Sigmoid colon (tissue), 7 donors: ENCODE measurements at regions of chr2 and their contacts with region 1.

Region 1: GRCh38 chr2:39696838-39697237 is 31.1 kb downstream of the TMEM178A start:
- DNase-seq: no peak
- H3K4me3 ChIP-seq: no peak overlapping the region
- H3K27ac ChIP-seq: peak overlapping the region; percentile 11 to 61 (median 44)
- H3K4me1 ChIP-seq: peaks cover 0 to 17% (median 15%) of the 10 kb centered on the region in 4 donors
- H3K27me3 ChIP-seq: no peaks in the 10 kb centered on the region
- CTCF ChIP-seq: peak in 3 of 4 experiments; percentile 25 to 38 (median 26)
- EP300 ChIP-seq: no peak
- POLR2A ChIP-seq: no peak

Region 2: GRCh38 chr2:39325966-39326365 is 370.9 kb before region 1 on chr2:
- intact Hi-C with region 1: no loop called
- DNase-seq: no peak
- H3K4me3 ChIP-seq: no peak overlapping the region
- H3K27ac ChIP-seq: no peak overlapping the region
- H3K4me1 ChIP-seq: peaks cover 0 to 7% (median 0%) of the 10 kb centered on the region in 4 donors
- H3K27me3 ChIP-seq: no peaks in the 10 kb centered on the region
- CTCF ChIP-seq: no peak
- EP300 ChIP-seq: no peak
- POLR2A ChIP-seq: no peak

Region 3: GRCh38 chr2:39379643-39380524 is 317.0 kb before region 1 on chr2:
- intact Hi-C with region 1: loop called (anchors 2 kb)
- DNase-seq: no peak
- H3K4me3 ChIP-seq: no peak overlapping the region
- H3K27ac ChIP-seq: peak overlapping the region; percentile 9 to 74 (median 59)
- H3K4me1 ChIP-seq: peaks cover 0 to 57% (median 41%) of the 10 kb centered on the region in 4 donors
- H3K27me3 ChIP-seq: no peaks in the 10 kb centered on the region
- CTCF ChIP-seq: peak in 3 of 4 experiments; percentile 55 to 57 (median 57)
- EP300 ChIP-seq: peak in 2 of 4 donors; percentile 39 to 81
- POLR2A ChIP-seq: no peak

Region 4: GRCh38 chr2:39499336-39499735 is 197.5 kb before region 1 on chr2:
- intact Hi-C with region 1: no loop called
- DNase-seq: no peak
- H3K4me3 ChIP-seq: no peak overlapping the region
- H3K27ac ChIP-seq: peak overlapping the region in 1 of 4 donors; percentile 12
- H3K4me1 ChIP-seq: peaks cover 0 to 44% (median 33%) of the 10 kb centered on the region in 4 donors
- H3K27me3 ChIP-seq: no peaks in the 10 kb centered on the region
- CTCF ChIP-seq: no peak
- EP300 ChIP-seq: no peak
- POLR2A ChIP-seq: no peak

Region 5: DNA sequence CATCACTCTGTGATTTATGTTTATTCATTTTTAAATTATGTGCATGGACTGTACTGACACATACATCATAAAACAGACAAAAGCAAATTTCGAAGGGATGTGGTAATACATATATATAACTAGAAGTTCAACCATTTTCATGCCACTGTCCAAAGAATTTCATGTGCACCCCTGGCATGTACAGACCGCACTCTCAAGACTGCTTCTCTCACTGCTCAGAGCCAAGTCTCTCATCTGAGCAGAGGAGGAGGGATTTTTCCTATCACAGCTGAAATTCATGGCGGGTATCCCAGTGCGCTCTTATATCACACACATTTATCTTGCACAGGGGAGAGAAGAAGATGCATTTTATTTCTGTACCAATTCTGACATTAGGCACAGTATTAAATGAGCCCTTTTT is 25.2 kb before region 1 on chr2:
- intact Hi-C with region 1: loop called (anchors 1 kb)
- DNase-seq: no peak
- H3K4me3 ChIP-seq: no peak overlapping the region
- H3K27ac ChIP-seq: no peak overlapping the region
- H3K4me1 ChIP-seq: peaks cover 0 to 5% (median 5%) of the 10 kb centered on the region in 4 donors
- H3K27me3 ChIP-seq: peaks cover 0 to 55% (median 20%) of the 10 kb centered on the region in 3 donors
- CTCF ChIP-seq: no peak
- EP300 ChIP-seq: no peak
- POLR2A ChIP-seq: no peak